H1 (cell line): ENCODE measurements at regions of chr2 and their contacts with region 1.

Region 1: DNA sequence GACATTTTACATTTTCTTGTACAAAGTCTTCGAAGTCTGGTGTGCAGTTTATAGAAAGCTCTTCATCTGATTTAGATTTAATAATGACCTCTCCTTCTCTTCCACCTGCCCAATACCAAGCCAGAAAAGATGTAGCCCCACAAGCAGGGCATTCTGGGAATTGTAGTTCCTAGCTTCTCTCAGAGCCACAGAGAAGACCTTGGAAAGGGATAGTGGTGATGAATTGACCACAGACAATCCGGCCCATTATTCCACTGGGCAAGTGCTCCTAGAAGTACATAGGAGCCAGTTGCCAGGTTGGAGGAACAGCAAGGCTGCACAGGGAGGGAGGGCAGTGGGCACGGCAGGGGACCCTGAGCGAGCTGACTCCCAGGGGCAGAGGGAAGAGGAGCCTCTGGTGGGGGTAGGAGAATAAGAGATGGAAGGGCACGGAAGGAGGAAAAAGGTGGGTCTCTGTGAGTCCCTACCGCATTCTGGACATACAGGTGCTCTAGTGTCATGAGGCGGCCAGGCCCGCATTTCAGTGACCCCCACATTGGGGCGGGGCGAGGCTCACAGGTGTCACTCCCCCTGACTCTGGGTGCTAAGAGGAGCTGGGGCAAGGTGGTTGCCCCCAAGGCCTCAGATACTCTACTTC is 152.5 kb upstream of the HAAO start:
- DNase-seq: no peak
- H3K4me3 ChIP-seq: no peak overlapping the region
- H3K27ac ChIP-seq: no peak overlapping the region
- H3K4me1 ChIP-seq: peaks cover 0 to 3% (median 0%) of the 10 kb centered on the region in 4 experiments; a peak in 3 of 7 replicates
- H3K27me3 ChIP-seq: no peaks in the 10 kb centered on the region
- CTCF ChIP-seq: no peak
- EP300 ChIP-seq: no peak
- POLR2A ChIP-seq: no peak
- RAD21 ChIP-seq: no peak

Region 2: DNA sequence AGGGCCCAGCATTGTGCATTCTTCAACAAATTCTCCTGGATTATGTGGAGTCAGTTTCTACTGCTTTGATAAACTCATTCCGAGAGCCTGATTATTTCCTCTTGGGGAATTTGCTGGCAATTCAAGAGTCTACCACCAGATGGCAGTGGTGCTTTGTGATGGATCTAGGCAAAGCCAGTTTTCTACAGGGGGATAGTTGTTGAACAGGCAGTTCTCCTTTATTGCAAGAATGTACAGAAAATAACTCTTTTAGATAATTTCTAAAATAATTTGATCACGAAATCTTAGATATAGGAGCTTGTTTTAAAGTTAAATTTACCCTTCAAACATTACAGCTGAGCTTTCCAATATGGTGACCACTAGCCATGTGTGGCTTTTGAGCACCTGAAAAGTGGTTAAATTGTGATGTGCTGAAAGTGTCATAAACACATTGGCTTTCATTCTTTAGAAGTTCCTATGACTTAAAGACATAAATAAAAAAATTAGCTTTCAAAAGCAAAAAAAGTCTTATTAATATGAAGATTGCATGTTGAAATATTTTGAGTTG is 85.8 kb before region 1 on chr2:
- CTCF ChIA-PET with region 1: interaction called, 63 read pairs
- POLR2A ChIA-PET with region 1: no interaction called
- DNase-seq: peak; percentile 19 to 94
- H3K4me3 ChIP-seq: no peak overlapping the region
- H3K27ac ChIP-seq: no peak overlapping the region
- H3K4me1 ChIP-seq: no peaks in the 10 kb centered on the region; a peak in 1 of 7 replicates
- H3K27me3 ChIP-seq: no peaks in the 10 kb centered on the region
- CTCF ChIP-seq: peak in 2 of 3 experiments; percentile 79 to 85; a peak in 3 of 4 replicates
- EP300 ChIP-seq: no peak
- POLR2A ChIP-seq: no peak
- RAD21 ChIP-seq: peak; percentile 96 to 97

Region 3: GRCh38 chr2:42959234-42960001 is 14.5 kb after region 1 on chr2:
- CTCF ChIA-PET with region 1: interaction called, 58 read pairs
- POLR2A ChIA-PET with region 1: interaction called, 3 read pairs
- DNase-seq: no peak
- H3K4me3 ChIP-seq: no peak overlapping the region
- H3K27ac ChIP-seq: no peak overlapping the region
- H3K4me1 ChIP-seq: peaks cover 4 to 25% (median 15%) of the 10 kb centered on the region in 4 experiments
- H3K27me3 ChIP-seq: 0 out of 7 replicates have a peak, but pooled peaks cover 0 to 3% (median 0%) of the 10 kb centered on the region in 4 experiments
- CTCF ChIP-seq: no peak
- EP300 ChIP-seq: no peak
- POLR2A ChIP-seq: no peak
- RAD21 ChIP-seq: no peak

Region 4: GRCh38 chr2:42974721-42975717 is 30.1 kb after region 1 on chr2:
- CTCF ChIA-PET with region 1: interaction called, 44 read pairs
- POLR2A ChIA-PET with region 1: no interaction called
- DNase-seq: peak; percentile 56 to 96
- H3K4me3 ChIP-seq: peak overlapping the region in 3 of 4 experiments; percentile 18 to 51 (median 34); a peak in 5 of 8 replicates
- H3K27ac ChIP-seq: no peak overlapping the region
- H3K4me1 ChIP-seq: peaks cover 0 to 7% (median 4%) of the 10 kb centered on the region in 4 experiments; a peak in 4 of 7 replicates
- H3K27me3 ChIP-seq: no peaks in the 10 kb centered on the region; a peak in 1 of 7 replicates
- CTCF ChIP-seq: peak; percentile 85 to 91 (median 89)
- EP300 ChIP-seq: 0 out of 3 replicates have a peak, but pooled peaks of 1 of the 2 experiments have one; percentile 22
- POLR2A ChIP-seq: no peak
- RAD21 ChIP-seq: peak; percentile 88 to 92

Region 5: GRCh38 chr2:42995752-42996422 is 51.0 kb after region 1 on chr2:
- CTCF ChIA-PET with region 1: no interaction called
- POLR2A ChIA-PET with region 1: no interaction called
- DNase-seq: no peak
- H3K4me3 ChIP-seq: no peak overlapping the region
- H3K27ac ChIP-seq: no peak overlapping the region
- H3K4me1 ChIP-seq: no peaks in the 10 kb centered on the region
- H3K27me3 ChIP-seq: no peaks in the 10 kb centered on the region
- CTCF ChIP-seq: no peak
- EP300 ChIP-seq: no peak
- POLR2A ChIP-seq: no peak
- RAD21 ChIP-seq: no peak

Region 6: GRCh38 chr2:43010438-43011157 is 65.7 kb after region 1 on chr2:
- CTCF ChIA-PET with region 1: interaction called, 18 read pairs
- POLR2A ChIA-PET with region 1: no interaction called
- DNase-seq: no peak
- H3K4me3 ChIP-seq: no peak overlapping the region
- H3K27ac ChIP-seq: no peak overlapping the region
- H3K4me1 ChIP-seq: peaks cover 0 to 5% (median 1%) of the 10 kb centered on the region in 4 experiments; a peak in 2 of 7 replicates
- H3K27me3 ChIP-seq: no peaks in the 10 kb centered on the region
- CTCF ChIP-seq: no peak
- EP300 ChIP-seq: no peak
- POLR2A ChIP-seq: no peak
- RAD21 ChIP-seq: no peak

Region 7: GRCh38 chr2:43024515-43025011 is 79.7 kb after region 1 on chr2:
- CTCF ChIA-PET with region 1: interaction called, 94 read pairs
- POLR2A ChIA-PET with region 1: no interaction called
- DNase-seq: peak; percentile 38 to 89
- H3K4me3 ChIP-seq: no peak overlapping the region
- H3K27ac ChIP-seq: no peak overlapping the region
- H3K4me1 ChIP-seq: peaks cover 2 to 10% (median 3%) of the 10 kb centered on the region in 4 experiments; a peak in 4 of 7 replicates
- H3K27me3 ChIP-seq: no peaks in the 10 kb centered on the region
- CTCF ChIP-seq: peak; percentile 87 to 93 (median 90)
- EP300 ChIP-seq: no peak
- POLR2A ChIP-seq: no peak
- RAD21 ChIP-seq: peak; percentile 88 to 93

Region 8: GRCh38 chr2:43493954-43494353 is 549.1 kb after region 1 on chr2:
- CTCF ChIA-PET with region 1: no interaction called
- POLR2A ChIA-PET with region 1: no interaction called
- DNase-seq: no peak
- H3K4me3 ChIP-seq: no peak overlapping the region
- H3K27ac ChIP-seq: no peak overlapping the region
- H3K4me1 ChIP-seq: no peaks in the 10 kb centered on the region; a peak in 1 of 7 replicates
- H3K27me3 ChIP-seq: no peaks in the 10 kb centered on the region
- CTCF ChIP-seq: no peak
- EP300 ChIP-seq: no peak
- POLR2A ChIP-seq: no peak
- RAD21 ChIP-seq: no peak

Region 9: GRCh38 chr2:43542285-43542937 is 597.5 kb after region 1 on chr2:
- CTCF ChIA-PET with region 1: interaction called, 13 read pairs
- POLR2A ChIA-PET with region 1: no interaction called
- DNase-seq: no peak
- H3K4me3 ChIP-seq: no peak overlapping the region
- H3K27ac ChIP-seq: no peak overlapping the region
- H3K4me1 ChIP-seq: no peaks in the 10 kb centered on the region
- H3K27me3 ChIP-seq: no peaks in the 10 kb centered on the region
- CTCF ChIP-seq: peak in 1 of 3 experiments; percentile 19; a peak in 2 of 4 replicates
- EP300 ChIP-seq: no peak
- POLR2A ChIP-seq: no peak
- RAD21 ChIP-seq: peak in 1 of 2 experiments; percentile 56